ENCODE measurements at regions of chr7 and their contacts with region 1.

Region 1: GRCh38 chr7:19665399-19666008 is 43.3 kb downstream of the POLR1F start:
- DNase-seq: no peak
- ATAC-seq: no peak
- H3K4me3 Mint-ChIP-seq: no peak overlapping the region
- H3K27ac Mint-ChIP-seq: no peak overlapping the region
- H3K4me1 Mint-ChIP-seq: peaks cover 6% of the 10 kb centered on the region
- H3K27me3 Mint-ChIP-seq: peaks cover 4% of the 10 kb centered on the region

Region 2: GRCh38 chr7:19121977-19122588 is 543.4 kb before region 1 on chr7:
- CTCF ChIA-PET with region 1: no interaction called
- POLR2A ChIA-PET with region 1: no interaction called
- intact Hi-C with region 1: loop called in 1 of 2 experiments (anchors 5 kb)
- DNase-seq: no peak
- ATAC-seq: no peak
- H3K4me3 Mint-ChIP-seq: no peak overlapping the region
- H3K27ac Mint-ChIP-seq: no peak overlapping the region
- H3K4me1 Mint-ChIP-seq: no peaks in the 10 kb centered on the region
- H3K27me3 Mint-ChIP-seq: peaks cover 34% of the 10 kb centered on the region